Activated CD4-positive, alpha-beta memory T cell treated with anti-CD3 and anti-CD28 coated beads, Interleukin-2, amount 10 ng/mL, durations not matched to agents 7 days and 5 days (primary cell): ENCODE measurements at regions of chr4 and their contacts with region 1.

Region 1: DNA sequence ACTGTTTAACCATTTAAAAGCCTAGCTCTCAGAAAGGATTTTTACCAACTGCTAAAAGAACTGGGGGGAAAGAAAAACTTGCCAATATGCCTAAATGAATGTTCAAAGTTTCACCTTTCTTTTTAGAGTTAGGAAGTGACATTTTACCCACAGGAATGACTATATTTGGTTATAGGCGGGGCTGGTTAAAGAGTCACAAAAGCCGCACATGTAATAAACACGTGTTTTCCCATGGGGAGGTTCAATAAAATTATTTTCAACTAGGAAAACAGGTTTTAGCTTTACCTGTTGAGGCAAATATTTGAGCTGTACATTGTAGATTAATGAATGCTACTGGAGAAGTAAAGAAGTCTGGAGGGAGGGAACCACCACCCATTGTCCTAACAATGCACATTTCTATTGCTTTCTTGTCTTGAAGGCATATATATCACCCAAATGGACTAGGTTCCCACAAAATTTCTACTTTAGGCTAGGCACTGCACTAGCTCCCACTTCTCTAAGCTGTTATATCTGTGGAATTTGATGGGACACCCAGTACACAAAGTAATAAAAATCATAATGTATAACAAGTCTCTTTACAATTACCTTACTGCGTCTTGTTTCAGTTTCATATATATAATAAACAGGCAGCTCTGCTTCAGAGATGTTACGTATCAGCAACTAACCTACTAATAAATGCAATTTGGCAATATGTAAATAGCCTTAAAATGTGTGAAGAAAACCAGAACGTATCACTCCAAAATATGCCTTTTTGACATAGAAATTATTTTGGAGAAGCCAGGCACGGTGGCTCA is 41.8 kb upstream of the UGDH start:
- DNase-seq: no peak
- H3K4me3 Mint-ChIP-seq: no peak overlapping the region
- H3K27ac Mint-ChIP-seq: no peak overlapping the region
- H3K4me1 Mint-ChIP-seq: peaks cover 7% of the 10 kb centered on the region
- H3K27me3 Mint-ChIP-seq: no peaks in the 10 kb centered on the region

Region 2: GRCh38 chr4:39527273-39528060 is 41.5 kb before region 1 on chr4 and contains the start of gene UGDH:
- CTCF ChIA-PET with region 1: no interaction called
- POLR2A ChIA-PET with region 1: interaction called, 10 read pairs
- DNase-seq: peak; percentile 92
- H3K4me3 Mint-ChIP-seq: peak within 1 kb of the TSS; percentile 97
- H3K27ac Mint-ChIP-seq: peak within 1 kb of the TSS; percentile 78
- H3K4me1 Mint-ChIP-seq: peaks cover 16% of the 10 kb centered on the region
- H3K27me3 Mint-ChIP-seq: no peaks in the 10 kb centered on the region
- total RNA-seq, gene UGDH: 16.9 to 18.8 TPM

Region 3: DNA sequence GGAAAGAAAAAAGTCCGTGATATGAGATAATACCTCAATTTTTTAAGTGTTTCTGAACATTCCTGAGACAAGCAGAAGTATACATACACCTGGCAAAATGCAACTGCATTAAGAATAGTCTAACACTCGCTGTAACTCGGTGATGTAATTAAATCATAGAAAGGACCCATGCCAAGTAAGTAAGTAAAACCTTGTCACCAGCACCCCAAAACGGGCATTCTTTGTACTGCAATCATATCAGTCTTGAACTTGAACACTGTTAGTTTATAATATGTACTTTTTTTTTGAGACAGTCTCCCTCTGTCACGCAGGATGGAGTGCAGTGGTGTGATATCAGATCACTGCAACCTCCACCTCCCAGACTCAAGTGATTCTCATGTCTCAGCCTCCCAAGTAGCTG is 22.3 kb after region 1 on chr4:
- CTCF ChIA-PET with region 1: no interaction called
- POLR2A ChIA-PET with region 1: no interaction called
- DNase-seq: no peak
- H3K4me3 Mint-ChIP-seq: no peak overlapping the region
- H3K27ac Mint-ChIP-seq: no peak overlapping the region
- H3K4me1 Mint-ChIP-seq: no peaks in the 10 kb centered on the region
- H3K27me3 Mint-ChIP-seq: no peaks in the 10 kb centered on the region

Region 4: GRCh38 chr4:39697740-39698423 is 128.9 kb after region 1 on chr4 and contains the start of gene UBE2K:
- CTCF ChIA-PET with region 1: no interaction called
- POLR2A ChIA-PET with region 1: no interaction called
- DNase-seq: peak; percentile 91
- H3K4me3 Mint-ChIP-seq: peak within 1 kb of the TSS; percentile 92
- H3K27ac Mint-ChIP-seq: peak within 1 kb of the TSS; percentile 97
- H3K4me1 Mint-ChIP-seq: peaks cover 35% of the 10 kb centered on the region
- H3K27me3 Mint-ChIP-seq: no peaks in the 10 kb centered on the region
- total RNA-seq, gene UBE2K: 82.3 to 86.5 TPM